ENCODE measurements at regions of chr1 and their contacts with region 1.

Region 1: GRCh38 chr1:24373044-24373443 is 40.5 kb downstream of the STPG1 start:
- DNase-seq: peak; percentile 25
- ATAC-seq: peak; percentile 92
- H3K4me3 Mint-ChIP-seq: peak overlapping the region; percentile 21
- H3K27ac Mint-ChIP-seq: peak overlapping the region; percentile 87
- H3K4me1 Mint-ChIP-seq: peaks cover 20% of the 10 kb centered on the region
- H3K27me3 Mint-ChIP-seq: no peaks in the 10 kb centered on the region
- CTCF ChIP-seq: no peak

Region 2: DNA sequence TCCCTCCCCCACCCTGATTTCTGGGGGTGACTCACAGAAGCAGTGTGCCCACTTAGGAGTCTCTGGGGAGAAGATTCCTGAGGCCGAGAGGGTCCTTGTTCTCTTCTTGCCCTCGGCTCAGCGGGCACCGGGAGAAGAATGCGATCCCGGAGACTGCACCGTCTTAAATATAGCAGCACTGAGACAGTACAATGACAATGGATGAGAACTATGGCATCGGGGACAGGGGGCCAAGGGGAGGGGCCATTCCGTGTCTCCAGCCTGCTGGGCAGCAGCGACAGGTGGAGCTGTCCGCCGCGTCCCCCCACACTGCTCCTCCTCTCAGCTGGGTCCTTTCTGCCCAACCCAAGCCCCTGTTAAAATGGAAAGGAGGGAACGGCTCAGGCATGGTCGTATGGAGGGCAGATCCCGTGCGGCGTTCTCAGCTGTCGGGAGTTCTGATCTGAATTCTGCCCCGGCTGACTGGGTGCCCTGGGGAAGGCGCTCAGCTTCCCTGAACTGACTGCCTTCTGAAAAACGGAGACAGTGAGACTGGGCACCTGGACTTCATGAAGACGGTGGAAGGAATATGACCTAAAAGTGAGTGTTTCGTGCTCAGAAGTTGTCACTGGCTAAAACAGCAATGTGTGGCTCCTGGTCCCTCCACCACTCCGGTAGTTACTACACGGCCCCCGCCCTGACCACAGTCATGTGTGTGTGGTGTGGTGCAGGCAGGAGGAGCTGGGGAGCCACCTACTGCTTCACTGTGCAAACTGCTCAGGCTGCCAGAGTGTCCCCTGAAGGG is 260.9 kb before region 1 on chr1 and contains the start of gene MYOM3:
- CTCF ChIA-PET with region 1: no interaction called
- POLR2A ChIA-PET with region 1: no interaction called
- intact Hi-C with region 1: no loop called
- DNase-seq: no peak
- ATAC-seq: peak; percentile 78
- H3K4me3 Mint-ChIP-seq: peak within 1 kb of the TSS; percentile 32
- H3K27ac Mint-ChIP-seq: no peak within 1 kb of the TSS
- H3K4me1 Mint-ChIP-seq: peaks cover 6% of the 10 kb centered on the region
- H3K27me3 Mint-ChIP-seq: peaks cover 31% of the 10 kb centered on the region
- CTCF ChIP-seq: no peak
- total RNA-seq, gene MYOM3: not detected in 2 replicates

Region 3: DNA sequence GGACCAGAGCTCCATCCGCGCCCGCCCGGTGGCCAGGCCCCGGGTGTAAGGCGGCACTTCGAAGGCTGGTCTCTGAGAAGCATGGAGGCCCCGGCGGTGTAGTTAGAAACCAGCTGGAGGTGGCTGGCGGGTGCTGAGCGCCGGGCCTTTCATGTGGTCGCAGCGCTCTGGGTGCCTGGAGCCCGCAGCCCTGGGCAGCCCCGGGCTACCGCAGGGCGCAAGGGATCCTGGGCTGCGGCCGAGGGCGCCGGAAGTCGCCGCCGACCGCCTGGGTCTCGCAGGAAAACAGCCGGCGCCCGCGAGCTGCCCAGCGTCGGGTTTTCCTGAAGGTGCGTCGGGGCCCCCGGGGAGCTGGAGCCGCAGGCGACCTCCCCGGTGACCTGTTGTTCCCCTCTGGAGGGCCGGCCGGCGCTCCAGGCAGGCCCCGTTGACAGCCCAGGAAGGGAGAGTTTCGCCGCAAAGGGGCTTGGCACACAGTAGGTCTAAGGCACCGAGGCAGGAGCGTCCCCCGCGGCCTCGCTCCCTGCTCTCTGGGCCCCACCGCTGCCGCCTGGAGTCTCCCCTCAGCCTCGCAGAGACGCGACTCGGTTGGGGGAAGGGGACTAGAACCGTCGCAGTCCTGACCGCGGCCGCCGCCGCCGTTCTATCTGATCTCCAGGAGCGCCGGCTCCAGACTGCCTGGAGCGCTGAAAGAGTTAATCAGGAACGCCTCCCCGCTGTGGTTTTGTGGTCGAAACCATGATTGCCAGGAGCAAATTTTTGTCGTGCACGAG is 51.2 kb before region 1 on chr1:
- CTCF ChIA-PET with region 1: no interaction called
- POLR2A ChIA-PET with region 1: interaction called, 17 read pairs
- intact Hi-C with region 1: loop called (anchors 2 kb)
- DNase-seq: peak; percentile 59
- ATAC-seq: peak; percentile 77
- H3K4me3 Mint-ChIP-seq: peak overlapping the region; percentile 83
- H3K27ac Mint-ChIP-seq: peak overlapping the region; percentile 72
- H3K4me1 Mint-ChIP-seq: peaks cover 49% of the 10 kb centered on the region
- H3K27me3 Mint-ChIP-seq: peaks cover 34% of the 10 kb centered on the region
- CTCF ChIP-seq: no peak

Region 4: GRCh38 chr1:24385160-24385940 is 12.3 kb after region 1 on chr1:
- CTCF ChIA-PET with region 1: interaction called, 4 read pairs
- POLR2A ChIA-PET with region 1: interaction called, 6 read pairs
- intact Hi-C with region 1: loop called (anchors 1 kb)
- DNase-seq: no peak
- ATAC-seq: peak; percentile 43
- H3K4me3 Mint-ChIP-seq: peak overlapping the region; percentile 29
- H3K27ac Mint-ChIP-seq: peak overlapping the region; percentile 69
- H3K4me1 Mint-ChIP-seq: peaks cover 32% of the 10 kb centered on the region
- H3K27me3 Mint-ChIP-seq: no peaks in the 10 kb centered on the region
- CTCF ChIP-seq: no peak

Region 5: DNA sequence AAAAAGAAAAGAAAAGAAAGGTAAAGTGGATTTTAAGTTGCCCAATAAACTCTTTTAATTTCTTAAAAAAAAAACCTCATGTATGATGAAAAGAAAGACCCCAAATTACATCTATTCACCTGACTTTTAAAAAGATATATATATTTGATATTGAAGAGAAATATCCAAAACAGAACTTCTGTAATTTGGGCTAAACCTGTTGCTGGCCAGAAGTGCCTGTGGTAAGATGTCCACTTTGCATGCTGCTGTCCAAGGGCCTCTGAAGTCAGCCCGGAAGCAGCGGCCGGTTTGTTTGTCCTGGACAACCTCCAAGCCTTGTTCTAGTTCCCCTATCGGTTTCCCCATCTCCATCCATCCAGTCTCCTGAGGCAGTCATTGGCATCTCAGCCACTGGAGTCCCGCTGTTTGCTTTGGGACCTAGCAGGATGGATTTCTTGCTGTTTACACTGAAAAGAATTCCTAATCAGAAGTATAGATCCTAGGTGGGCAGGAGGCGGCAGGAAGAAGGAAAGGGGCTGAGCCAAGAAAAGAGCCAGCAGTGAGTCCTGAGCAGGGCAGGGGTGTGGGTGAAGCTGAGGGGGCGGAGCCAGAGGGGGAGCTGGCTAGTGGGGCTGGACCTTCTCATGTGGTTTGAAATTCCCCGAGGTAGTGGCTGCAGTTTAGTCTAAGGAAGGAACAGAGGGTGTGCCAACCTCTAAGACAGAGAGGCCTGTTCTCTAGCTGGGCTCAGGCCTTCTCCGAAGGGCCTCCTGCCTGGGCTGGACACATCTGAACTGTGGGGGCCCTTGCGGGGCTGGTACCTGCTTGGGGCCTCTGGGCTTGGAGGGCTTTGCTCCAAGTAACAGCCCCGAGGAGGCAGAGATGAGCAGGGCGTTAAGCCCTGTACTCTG is 186.1 kb after region 1 on chr1:
- CTCF ChIA-PET with region 1: no interaction called
- POLR2A ChIA-PET with region 1: no interaction called
- intact Hi-C with region 1: no loop called
- DNase-seq: no peak
- ATAC-seq: no peak
- H3K4me3 Mint-ChIP-seq: no peak overlapping the region
- H3K27ac Mint-ChIP-seq: no peak overlapping the region
- H3K4me1 Mint-ChIP-seq: peaks cover 10% of the 10 kb centered on the region
- H3K27me3 Mint-ChIP-seq: peaks cover 13% of the 10 kb centered on the region
- CTCF ChIP-seq: no peak

Measured in activated B cell treated with CpG ODN at 0.5 μM for 24 hours (primary cell).